ENCODE measurements at regions of chr20 and their contacts with region 1.

Region 1: GRCh38 chr20:49610701-49611538 is 43.0 kb upstream of the PTGIS start:
- DNase-seq: peak; percentile 90
- H3K4me3 ChIP-seq: peak overlapping the region; percentile 44
- H3K27ac ChIP-seq: no peak overlapping the region
- H3K4me1 ChIP-seq: peaks cover 15% of the 10 kb centered on the region
- CTCF ChIP-seq: peak; percentile 99

Region 2: DNA sequence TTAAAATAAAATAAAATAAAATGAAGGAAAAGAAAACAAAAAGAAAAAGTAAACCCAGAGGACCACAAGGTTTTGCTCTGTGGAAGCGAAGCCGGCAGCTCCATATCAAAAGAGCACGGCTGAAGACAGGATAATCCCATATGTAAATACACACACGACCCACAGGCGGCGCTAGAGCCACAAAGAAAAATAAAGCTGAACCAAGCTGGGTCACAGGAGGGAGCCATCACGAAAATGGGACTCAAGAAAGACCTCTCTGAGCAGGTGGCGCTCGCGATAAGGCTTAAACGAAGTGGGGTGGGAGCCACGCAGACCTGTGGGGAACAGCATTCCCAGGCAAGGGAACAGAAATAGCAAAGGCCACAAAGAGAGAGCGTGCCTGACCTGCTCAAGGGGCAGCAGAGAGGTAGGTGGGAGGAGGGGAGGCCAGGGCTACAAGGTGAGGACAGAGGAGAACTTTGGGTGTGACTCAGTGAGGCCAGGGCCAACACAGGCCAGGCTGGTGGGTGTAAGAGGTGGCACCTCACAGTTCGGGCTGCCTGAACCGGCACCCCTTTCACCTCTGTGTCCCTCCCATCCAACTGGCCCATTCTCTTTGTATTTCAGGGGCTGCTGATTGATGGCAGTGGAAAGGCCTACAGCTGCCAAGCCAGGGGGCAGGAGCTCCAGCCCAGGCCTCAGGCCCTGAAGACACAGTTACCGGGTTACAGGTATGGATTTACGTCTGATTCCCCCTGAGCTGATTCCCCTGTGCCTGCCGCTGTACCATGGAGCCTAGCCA is 69.0 kb before region 1 on chr20:
- CTCF ChIA-PET with region 1: interaction called, 9 read pairs
- POLR2A ChIA-PET with region 1: no interaction called
- intact Hi-C with region 1: loop called (anchors 1 kb)
- DNase-seq: peak; percentile 89
- H3K4me3 ChIP-seq: no peak overlapping the region
- H3K27ac ChIP-seq: no peak overlapping the region
- H3K4me1 ChIP-seq: no peaks in the 10 kb centered on the region
- CTCF ChIP-seq: peak; percentile 98

Region 3: DNA sequence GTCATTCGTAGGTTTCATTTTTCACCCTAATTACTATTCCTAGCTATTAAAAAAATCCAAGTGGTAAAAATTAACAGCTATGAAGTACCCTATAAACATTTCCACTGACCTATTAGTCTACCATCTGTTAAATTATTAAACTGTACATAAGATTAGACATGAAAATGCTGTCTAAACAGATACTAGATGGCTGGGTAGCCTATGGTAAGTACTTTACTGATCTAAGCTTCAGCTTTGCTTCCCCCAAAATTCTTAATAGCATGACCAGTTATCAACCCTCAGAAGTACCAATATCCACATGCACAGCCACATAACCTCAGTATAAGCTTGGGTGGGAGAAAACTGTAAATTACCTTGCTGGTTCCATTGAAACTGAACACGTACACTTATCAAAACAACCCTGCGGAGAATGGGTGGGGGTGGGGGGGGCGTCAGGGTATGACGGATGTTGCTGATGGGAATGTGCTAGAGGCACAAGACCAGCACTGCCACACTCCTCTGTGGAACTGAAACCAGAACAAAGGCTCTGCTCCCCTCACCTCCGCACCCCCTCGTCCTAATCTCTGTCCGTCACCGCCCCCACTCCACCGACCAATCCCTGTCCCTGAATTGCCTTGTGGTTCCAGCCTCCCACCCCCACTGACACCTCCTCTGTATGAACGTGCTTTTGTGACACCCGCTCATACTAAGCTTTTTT is 57.4 kb after region 1 on chr20:
- CTCF ChIA-PET with region 1: no interaction called
- POLR2A ChIA-PET with region 1: interaction called, 3 read pairs
- intact Hi-C with region 1: loop called (anchors 2 kb)
- DNase-seq: peak; percentile 74
- H3K4me3 ChIP-seq: peak overlapping the region; percentile 64
- H3K27ac ChIP-seq: peak overlapping the region; percentile 61
- H3K4me1 ChIP-seq: peaks cover 57% of the 10 kb centered on the region
- CTCF ChIP-seq: no peak

Region 4: GRCh38 chr20:49785852-49786175 is 174.9 kb after region 1 on chr20:
- CTCF ChIA-PET with region 1: no interaction called
- POLR2A ChIA-PET with region 1: no interaction called
- intact Hi-C with region 1: no loop called
- DNase-seq: peak; percentile 68
- H3K4me3 ChIP-seq: peak overlapping the region; percentile 51
- H3K27ac ChIP-seq: peak overlapping the region; percentile 38
- H3K4me1 ChIP-seq: peaks cover 26% of the 10 kb centered on the region
- CTCF ChIP-seq: no peak

Region 5: DNA sequence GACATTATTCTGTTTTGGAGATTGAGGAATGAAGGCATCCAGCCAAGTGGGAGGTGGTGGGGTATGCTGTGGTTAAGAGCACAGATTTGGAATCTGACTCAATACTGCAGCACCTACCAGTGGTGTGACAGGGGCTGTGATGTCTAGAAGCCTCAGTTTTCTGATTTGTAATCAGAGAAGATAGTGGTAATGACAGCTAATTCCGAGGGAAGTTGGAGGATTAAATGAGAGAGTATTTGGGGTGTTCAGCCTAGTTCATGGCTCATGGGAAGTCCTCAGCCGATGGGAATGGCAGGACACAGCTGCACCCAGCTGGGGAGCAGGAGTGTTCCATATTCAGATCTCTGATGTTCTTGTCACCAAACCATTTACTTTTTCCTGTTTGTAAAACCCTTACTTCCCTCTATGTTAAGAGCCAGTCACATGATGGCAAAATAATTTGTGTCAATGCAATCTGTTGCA is 211.0 kb after region 1 on chr20:
- CTCF ChIA-PET with region 1: no interaction called
- POLR2A ChIA-PET with region 1: no interaction called
- intact Hi-C with region 1: loop called (anchors 1 kb)
- DNase-seq: peak; percentile 64
- H3K4me3 ChIP-seq: peak overlapping the region; percentile 33
- H3K27ac ChIP-seq: peak overlapping the region; percentile 91
- H3K4me1 ChIP-seq: peaks cover 43% of the 10 kb centered on the region
- CTCF ChIP-seq: peak; percentile 75

Region 6: GRCh38 chr20:49888345-49888966 is 277.5 kb after region 1 on chr20:
- CTCF ChIA-PET with region 1: interaction called, 4 read pairs
- POLR2A ChIA-PET with region 1: no interaction called
- intact Hi-C with region 1: loop called (anchors 1 kb)
- DNase-seq: peak; percentile 77
- H3K4me3 ChIP-seq: no peak overlapping the region
- H3K27ac ChIP-seq: no peak overlapping the region
- H3K4me1 ChIP-seq: peaks cover 5% of the 10 kb centered on the region
- CTCF ChIP-seq: peak; percentile 96

Region 7: GRCh38 chr20:50054626-50055511 is 443.9 kb after region 1 on chr20:
- CTCF ChIA-PET with region 1: no interaction called
- POLR2A ChIA-PET with region 1: no interaction called
- intact Hi-C with region 1: no loop called
- DNase-seq: no peak
- H3K4me3 ChIP-seq: no peak overlapping the region
- H3K27ac ChIP-seq: no peak overlapping the region
- H3K4me1 ChIP-seq: peaks cover 7% of the 10 kb centered on the region
- CTCF ChIP-seq: no peak

Measured in OCI-LY7 (cell line).